Mammary epithelial cell (primary cell): ENCODE measurements at regions of chrX and their contacts with region 1.

Region 1: GRCh38 chrX:53224860-53225797 is at the start of gene KDM5C:
- DNase-seq: peak; percentile 90
- H3K4me3 ChIP-seq: peak within 1 kb of the TSS; percentile 84 to 92 (median 86)
- H3K27ac ChIP-seq: peak within 1 kb of the TSS; percentile 97
- H3K4me1 ChIP-seq: peaks cover 27% of the 10 kb centered on the region
- H3K27me3 ChIP-seq: no peaks in the 10 kb centered on the region
- CTCF ChIP-seq: no peak
- total RNA-seq, gene KDM5C: 106 to 125 TPM

Region 2: GRCh38 chrX:53071604-53072417 is 153.3 kb before region 1 on chrX:
- CTCF ChIA-PET with region 1: no interaction called
- dilution Hi-C with region 1: no loop called
- in situ Hi-C with region 1: no loop called
- intact Hi-C with region 1: loop called (anchors 5 kb)
- DNase-seq: peak; percentile 64
- H3K4me3 ChIP-seq: peak overlapping the region; percentile 6 to 46 (median 36)
- H3K27ac ChIP-seq: no peak overlapping the region
- H3K4me1 ChIP-seq: peaks cover 4% of the 10 kb centered on the region
- H3K27me3 ChIP-seq: peaks cover 3% of the 10 kb centered on the region
- CTCF ChIP-seq: peak; percentile 57 to 74

Region 3: DNA sequence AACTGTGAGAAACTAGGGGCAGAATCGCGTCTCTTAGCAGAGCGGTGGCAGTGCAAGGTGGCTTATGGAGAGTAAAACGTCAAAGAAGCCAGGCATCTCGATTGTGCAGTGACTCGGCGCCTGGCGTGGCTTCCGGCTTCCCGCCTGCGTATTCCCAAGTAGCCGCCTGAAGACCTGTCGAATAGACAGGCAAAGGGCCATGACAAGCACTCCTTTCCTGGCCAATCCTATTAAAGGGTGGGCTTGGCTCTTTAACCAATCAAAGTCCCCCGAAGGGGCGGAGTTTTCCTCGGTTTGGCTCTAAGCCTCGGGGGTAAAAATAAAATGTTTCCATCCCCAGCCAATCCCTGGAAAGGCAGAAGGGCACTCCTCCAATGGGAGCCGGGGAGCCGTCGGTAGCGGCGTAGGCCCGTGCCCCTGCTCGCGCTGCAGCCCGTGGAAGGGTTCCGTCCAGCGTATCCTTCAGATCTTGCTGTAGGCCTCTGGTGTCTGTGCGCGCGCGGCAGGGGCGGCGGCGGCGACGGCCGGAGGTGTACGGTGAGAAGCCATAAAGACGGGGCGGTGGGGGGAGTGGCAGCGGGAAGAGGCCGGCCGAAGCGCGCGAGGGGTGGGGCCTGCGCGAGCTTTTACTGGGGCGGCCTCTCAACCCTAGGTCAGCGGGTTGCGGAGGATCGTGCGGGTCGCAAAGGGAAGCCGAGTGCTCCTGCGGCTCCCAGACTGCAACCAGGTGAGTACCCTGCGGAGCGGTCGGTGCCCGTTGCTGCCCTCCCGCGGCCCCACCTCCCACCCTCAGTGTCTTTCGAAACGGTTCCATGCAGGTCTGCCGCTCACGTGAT is 131.2 kb before region 1 on chrX and contains the start of gene KANTR:
- CTCF ChIA-PET with region 1: no interaction called
- dilution Hi-C with region 1: no loop called
- in situ Hi-C with region 1: no loop called
- intact Hi-C with region 1: loop called (anchors 5 kb)
- DNase-seq: peak; percentile 92
- H3K4me3 ChIP-seq: peak within 1 kb of the TSS; percentile 56 to 72 (median 60)
- H3K27ac ChIP-seq: peak within 1 kb of the TSS; percentile 71
- H3K4me1 ChIP-seq: peaks cover 3% of the 10 kb centered on the region
- H3K27me3 ChIP-seq: no peaks in the 10 kb centered on the region
- CTCF ChIP-seq: peak in 1 of 2 donors; percentile 12
- total RNA-seq, gene KANTR: 5.1 to 8.0 TPM

Region 4: GRCh38 chrX:53133400-53133799 is 91.7 kb before region 1 on chrX:
- CTCF ChIA-PET with region 1: no interaction called
- dilution Hi-C with region 1: no loop called
- in situ Hi-C with region 1: no loop called
- intact Hi-C with region 1: loop called (anchors 5 kb)
- DNase-seq: peak; percentile 68
- H3K4me3 ChIP-seq: no peak overlapping the region
- H3K27ac ChIP-seq: no peak overlapping the region
- H3K4me1 ChIP-seq: no peaks in the 10 kb centered on the region
- H3K27me3 ChIP-seq: peaks cover 3% of the 10 kb centered on the region
- CTCF ChIP-seq: no peak

Region 5: GRCh38 chrX:53186351-53186750 is 38.8 kb before region 1 on chrX:
- CTCF ChIA-PET with region 1: no interaction called
- dilution Hi-C with region 1: no loop called
- in situ Hi-C with region 1: no loop called
- intact Hi-C with region 1: loop called (anchors 1 kb)
- DNase-seq: peak; percentile 96
- H3K4me3 ChIP-seq: no peak overlapping the region
- H3K27ac ChIP-seq: peak overlapping the region; percentile 9
- H3K4me1 ChIP-seq: peaks cover 24% of the 10 kb centered on the region
- H3K27me3 ChIP-seq: no peaks in the 10 kb centered on the region
- CTCF ChIP-seq: no peak

Region 6: DNA sequence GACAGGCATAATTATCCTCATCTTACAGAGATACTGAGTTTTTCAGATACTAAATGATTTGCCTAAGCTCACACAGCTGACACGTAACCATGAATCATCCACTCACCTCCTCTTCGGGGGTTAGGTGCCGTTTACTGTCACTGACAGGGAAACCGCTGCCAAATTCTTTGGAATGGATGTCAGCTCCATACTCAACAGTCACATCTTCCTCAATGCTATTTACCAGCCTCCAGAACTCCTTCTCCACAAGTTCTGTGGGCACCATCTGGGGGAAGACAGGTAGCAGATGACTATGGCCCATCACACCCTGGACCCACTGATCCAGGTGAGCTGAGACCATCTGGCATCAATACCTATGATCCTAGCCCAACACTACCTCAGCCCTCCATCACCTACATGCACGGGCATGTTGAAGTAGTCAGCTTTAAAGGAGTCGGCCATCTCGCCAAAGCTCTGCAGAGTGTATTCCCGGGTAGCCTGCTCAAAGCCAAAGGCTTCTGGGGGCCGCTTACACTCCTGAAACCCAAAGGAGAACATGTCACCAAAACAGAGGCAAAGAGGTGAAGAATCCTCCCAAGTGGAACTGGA is 13.6 kb before region 1 on chrX:
- CTCF ChIA-PET with region 1: no interaction called
- dilution Hi-C with region 1: no loop called
- in situ Hi-C with region 1: no loop called
- intact Hi-C with region 1: loop called (anchors 1 kb)
- DNase-seq: peak; percentile 74
- H3K4me3 ChIP-seq: no peak overlapping the region
- H3K27ac ChIP-seq: peak overlapping the region; percentile 3
- H3K4me1 ChIP-seq: peaks cover 15% of the 10 kb centered on the region
- H3K27me3 ChIP-seq: no peaks in the 10 kb centered on the region
- CTCF ChIP-seq: no peak